Dorsolateral prefrontal cortex (tissue), 120 donors: ENCODE measurements at regions of chr3 and their contacts with region 1.

Region 1: DNA sequence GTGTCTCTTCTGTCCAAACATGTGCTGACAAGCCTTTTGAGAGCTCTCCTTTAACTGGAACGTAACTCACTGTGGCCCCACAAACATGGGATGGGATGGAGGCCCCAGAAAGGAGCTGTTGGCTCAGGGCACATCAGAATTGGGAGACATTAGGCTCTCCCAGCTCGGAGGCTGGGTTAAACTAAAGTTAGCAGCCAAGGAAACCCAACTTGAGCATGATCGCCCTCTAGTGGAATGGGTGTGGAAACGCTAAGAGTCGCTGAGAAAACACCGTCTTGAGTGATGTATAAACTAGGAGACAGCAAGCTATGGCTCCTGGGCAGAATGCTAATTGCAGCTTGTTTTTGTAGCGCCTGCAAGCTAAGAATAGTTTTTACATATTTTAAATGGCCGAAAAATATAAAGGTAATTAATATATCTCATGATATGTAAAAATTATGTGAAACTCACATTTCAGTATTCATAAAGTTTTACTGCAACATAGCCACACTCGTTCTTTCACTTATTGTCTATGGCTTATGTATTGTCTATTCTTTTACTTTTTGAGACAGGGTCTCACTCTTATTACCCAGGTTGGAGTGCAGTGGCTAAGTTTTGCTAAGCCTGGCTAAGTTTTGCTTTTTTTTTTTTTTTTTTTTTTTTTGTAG is 138.8 kb upstream of the HACD2 start:
- DNase-seq: peak in 6 of 10 donors; percentile 22 to 65 (median 56)
- H3K4me3 ChIP-seq: peak overlapping the region in 22 of 59 donors; percentile 6 to 49 (median 32)
- H3K27ac ChIP-seq: no peak overlapping the region
- H3K27me3 ChIP-seq: no peaks in the 10 kb centered on the region
- CTCF ChIP-seq: peak; percentile 56 to 87 (median 82)

Region 2: DNA sequence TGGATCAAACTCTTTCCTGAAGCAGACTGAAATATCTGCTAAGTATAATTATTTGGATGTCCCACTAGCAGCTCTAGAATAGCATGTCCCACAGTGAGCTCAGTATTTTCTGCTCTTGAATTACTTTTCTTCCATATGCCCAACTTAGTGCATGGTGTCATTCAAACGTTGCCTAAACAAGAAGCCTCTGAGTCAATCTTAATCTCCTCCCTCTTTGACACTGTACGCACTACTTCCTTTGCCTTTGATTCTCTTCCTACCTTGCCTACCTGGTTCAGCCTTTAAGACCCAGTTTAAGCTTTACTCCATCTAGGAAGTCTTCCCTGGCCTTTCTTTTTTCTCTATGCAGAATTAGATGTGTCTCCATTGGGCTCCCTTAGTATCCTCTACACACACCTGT is 467.4 kb before region 1 on chr3:
- intact Hi-C with region 1: no loop called
- DNase-seq: no peak
- H3K4me3 ChIP-seq: no peak overlapping the region
- H3K27ac ChIP-seq: no peak overlapping the region
- H3K27me3 ChIP-seq: no peaks in the 10 kb centered on the region
- CTCF ChIP-seq: no peak

Region 3: GRCh38 chr3:123406598-123406997 is 317.0 kb before region 1 on chr3:
- intact Hi-C with region 1: no loop called
- DNase-seq: peak in 3 of 10 donors; percentile 28 to 56 (median 36)
- H3K4me3 ChIP-seq: no peak overlapping the region
- H3K27ac ChIP-seq: peak overlapping the region in 30 of 59 donors; percentile 2 to 75 (median 32)
- H3K27me3 ChIP-seq: no peaks in the 10 kb centered on the region
- CTCF ChIP-seq: no peak

Region 4: DNA sequence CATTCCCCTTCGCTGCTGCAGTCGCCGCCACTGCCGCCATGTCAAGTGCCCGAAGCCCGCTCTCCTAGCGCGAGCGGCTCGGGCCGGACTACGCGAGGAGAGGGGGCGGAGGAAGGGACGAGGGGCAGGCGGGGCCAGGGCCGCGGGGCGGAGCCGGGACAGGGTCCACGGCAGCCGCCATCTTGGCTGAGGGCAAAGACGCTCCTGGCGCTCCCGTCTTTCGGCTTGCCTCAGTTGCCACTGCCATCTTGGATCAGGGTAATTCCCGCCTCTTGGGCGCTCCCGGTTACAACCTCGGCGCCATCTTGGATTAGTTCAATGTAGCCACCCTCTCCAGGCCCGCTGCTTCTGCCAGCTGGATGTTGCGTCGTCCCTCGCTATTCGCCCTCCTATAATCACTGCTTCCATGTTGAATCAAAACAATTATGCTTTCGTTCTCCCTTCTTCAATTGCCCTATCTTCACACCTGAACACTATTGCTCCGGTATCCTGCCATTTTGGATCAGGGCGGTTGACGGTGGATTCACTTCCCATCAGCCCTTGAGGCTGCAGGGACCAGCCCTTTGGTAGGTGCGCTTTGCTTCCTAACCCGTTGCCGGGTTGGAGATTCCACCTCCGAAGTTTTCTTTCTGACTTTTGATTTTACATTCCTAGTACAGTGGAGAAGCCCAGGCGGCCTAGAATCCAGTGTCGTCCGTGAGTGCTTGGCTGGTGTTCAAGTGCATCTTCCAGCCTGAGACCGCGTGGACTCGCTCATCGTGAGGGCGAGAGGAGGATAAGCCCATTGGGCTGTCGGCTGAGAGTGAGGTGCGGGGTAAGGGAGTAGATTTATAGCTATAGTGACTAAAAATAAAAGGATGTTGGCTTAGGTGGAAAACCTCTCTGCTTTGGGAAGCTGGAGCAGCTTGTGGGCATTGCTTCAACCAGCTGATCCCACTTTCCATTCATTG is 138.4 kb before region 1 on chr3 and contains the start of gene HACD2:
- intact Hi-C with region 1: loop called in 1 of 2 experiments (anchors 10 kb)
- DNase-seq: peak; percentile 92 to 98 (median 96)
- H3K4me3 ChIP-seq: peak within 1 kb of the TSS; percentile 53 to 97 (median 89)
- H3K27ac ChIP-seq: peak within 1 kb of the TSS; percentile 83 to 100 (median 97)
- H3K27me3 ChIP-seq: no peaks in the 10 kb centered on the region
- CTCF ChIP-seq: peak in 24 of 56 donors; percentile 6 to 34 (median 18)
- total RNA-seq, gene HACD2: 26.7 to 65.5 (median 39.9) TPM

Region 5: DNA sequence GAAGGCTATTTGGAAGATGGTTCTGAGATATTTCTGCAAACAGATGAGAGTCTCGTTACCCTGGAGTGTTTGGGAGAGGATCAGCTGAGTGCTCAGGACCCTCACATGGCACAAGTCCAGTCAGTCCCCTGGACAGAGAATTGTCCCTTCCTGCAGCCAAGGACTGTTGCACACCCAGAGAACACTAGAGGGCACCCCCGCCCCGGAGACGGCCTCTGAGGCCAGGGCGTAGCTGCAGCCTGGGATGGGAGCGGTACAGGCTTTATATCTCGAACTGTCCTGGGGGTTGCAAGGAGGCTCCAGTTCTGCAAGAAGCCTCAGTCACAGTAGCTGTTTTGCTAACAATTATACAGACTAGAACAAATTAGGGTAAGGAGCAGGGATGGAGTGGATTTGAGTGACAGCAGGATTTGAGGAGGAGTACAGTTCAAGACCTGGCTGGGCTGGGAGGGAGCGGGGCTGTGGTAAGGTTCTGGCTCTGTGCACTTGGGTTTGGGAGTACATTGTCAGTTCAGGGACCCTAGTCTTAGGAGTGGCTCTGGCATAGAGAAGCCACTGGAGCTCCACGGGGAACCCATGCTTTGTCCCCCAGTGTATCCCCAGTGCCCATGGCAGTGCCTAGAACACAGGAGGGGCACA is 71.2 kb before region 1 on chr3:
- intact Hi-C with region 1: loop called (anchors 2 to 5 kb)
- DNase-seq: peak; percentile 63 to 88 (median 76)
- H3K4me3 ChIP-seq: no peak overlapping the region
- H3K27ac ChIP-seq: peak overlapping the region in 49 of 59 donors; percentile 10 to 86 (median 68)
- H3K27me3 ChIP-seq: no peaks in the 10 kb centered on the region
- CTCF ChIP-seq: peak; percentile 61 to 96 (median 88)

Region 6: DNA sequence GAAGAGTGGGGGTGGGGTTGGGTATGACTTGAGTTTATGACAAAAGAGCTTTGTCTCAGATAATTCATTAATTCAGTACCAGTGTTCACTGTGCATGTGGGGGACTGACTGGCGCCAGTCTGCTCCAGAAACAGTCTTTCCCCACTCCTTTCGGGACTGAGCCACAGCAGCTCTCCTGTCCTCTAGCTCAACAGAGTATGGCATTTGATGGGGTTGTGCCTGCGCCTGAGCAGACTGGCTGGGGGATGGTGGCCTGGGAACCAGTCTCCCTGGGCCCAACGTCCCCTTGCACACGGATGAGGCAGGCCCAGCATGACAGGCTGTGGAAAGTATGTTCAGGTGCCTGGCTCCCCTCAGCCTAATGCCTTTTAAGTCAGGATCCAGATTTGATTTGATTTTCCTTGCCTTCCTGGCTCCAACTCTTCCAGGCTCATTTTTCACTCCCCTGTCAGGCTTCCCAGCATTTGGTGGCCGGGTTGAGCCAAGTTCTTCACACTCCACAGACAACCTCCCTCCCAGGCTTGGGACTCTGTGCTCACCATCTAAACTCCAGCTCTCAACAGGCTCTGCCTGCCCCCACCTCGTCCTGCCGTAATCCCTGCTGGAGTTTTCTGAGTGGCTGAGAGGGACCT is 55.5 kb after region 1 on chr3:
- intact Hi-C with region 1: loop called in 1 of 2 experiments (anchors 5 kb)
- DNase-seq: peak in 2 of 10 donors; percentile 46 to 54
- H3K4me3 ChIP-seq: peak overlapping the region in 1 of 59 donors; percentile 16
- H3K27ac ChIP-seq: peak overlapping the region in 15 of 59 donors; percentile 5 to 70 (median 43)
- H3K27me3 ChIP-seq: no peaks in the 10 kb centered on the region
- CTCF ChIP-seq: no peak

Region 7: GRCh38 chr3:123986427-123986826 is 262.8 kb after region 1 on chr3:
- intact Hi-C with region 1: loop called in 1 of 2 experiments (anchors 10 kb)
- DNase-seq: no peak
- H3K4me3 ChIP-seq: no peak overlapping the region
- H3K27ac ChIP-seq: no peak overlapping the region
- H3K27me3 ChIP-seq: peaks cover 0 to 4% (median 0%) of the 10 kb centered on the region in 45 donors
- CTCF ChIP-seq: no peak